ENCODE measurements at regions of chr14 and their contacts with region 1.

Region 1: GRCh38 chr14:94707494-94707893 is 62.4 kb downstream of the GSC start:
- DNase-seq: no peak
- CTCF ChIP-seq: no peak

Region 2: DNA sequence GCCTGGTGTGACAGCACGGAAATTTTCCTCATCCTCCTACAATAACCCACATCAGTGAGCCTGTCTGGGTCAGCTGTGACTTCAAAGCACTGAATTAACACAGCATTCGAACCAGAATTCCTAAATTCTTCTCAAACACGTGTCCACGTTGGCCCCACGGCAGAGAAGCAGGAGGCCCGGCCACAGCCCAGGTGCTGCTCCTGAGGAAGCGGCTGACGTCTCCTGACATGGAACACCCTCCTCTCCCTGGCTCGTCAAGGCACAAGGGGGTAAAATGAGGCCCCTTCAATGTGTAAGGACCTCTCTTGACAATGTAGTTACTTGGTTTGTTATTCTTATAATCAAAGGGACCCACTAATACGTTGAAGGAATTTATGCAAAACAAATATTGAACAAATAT is 218.7 kb after region 1 on chr14:
- in situ Hi-C with region 1: no loop called
- DNase-seq: no peak
- CTCF ChIP-seq: no peak

Region 3: DNA sequence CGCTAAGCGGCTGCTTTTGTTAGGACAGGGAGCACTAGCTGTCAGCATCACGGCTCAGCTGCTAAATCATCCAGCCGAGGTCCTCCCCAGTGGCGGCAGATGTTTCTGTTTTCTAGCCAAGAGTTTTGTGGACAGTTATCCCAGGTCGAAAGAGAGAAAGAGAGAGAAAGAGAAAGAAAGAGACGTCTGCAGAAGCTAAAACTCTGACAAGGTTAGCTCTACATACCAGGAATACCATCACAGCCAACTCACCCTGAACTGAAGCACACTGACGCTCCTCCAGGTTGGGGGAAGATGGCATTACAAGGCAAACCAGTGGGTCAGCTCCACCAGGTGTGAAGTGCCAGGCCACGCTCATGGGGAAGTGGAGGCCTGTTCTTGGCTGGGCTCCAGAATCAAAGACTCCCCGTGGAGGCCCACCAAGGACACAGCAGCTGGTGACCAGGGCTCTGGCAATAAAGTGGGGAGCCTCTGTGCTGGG is 514.7 kb after region 1 on chr14:
- in situ Hi-C with region 1: loop called (anchors 25 kb)
- DNase-seq: no peak
- CTCF ChIP-seq: no peak

Measured in GM13977 (cell line).